ENCODE measurements at regions of chr4 and their contacts with region 1.

Region 1: GRCh38 chr4:66439508-66439907 is 769.2 kb upstream of the EPHA5 start:
- DNase-seq: no peak
- ATAC-seq: no peak

Region 2: DNA sequence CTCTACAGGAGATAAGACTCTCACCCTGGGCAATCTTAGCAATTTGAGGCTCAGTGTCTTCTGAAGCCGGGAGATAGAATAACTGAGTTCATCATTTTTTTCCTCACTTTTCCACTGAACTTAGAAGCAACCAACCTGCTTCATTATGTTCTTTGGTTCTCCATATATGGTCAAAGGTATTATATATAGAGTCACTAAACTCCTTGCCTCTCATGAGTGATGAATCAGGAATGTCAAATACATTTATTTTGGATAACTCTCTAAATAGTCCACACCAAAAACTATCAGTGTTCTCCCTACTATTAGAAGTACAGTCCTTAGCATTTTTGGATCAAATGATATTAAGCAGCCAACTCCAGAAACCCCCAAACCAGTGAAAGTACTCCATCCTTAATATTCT is 347.7 kb before region 1 on chr4:
- intact Hi-C with region 1: loop called (anchors 5 kb)
- DNase-seq: no peak
- ATAC-seq: no peak

Measured in sciatic nerve (tissue), 2 donors.